ENCODE measurements at regions of chr12 and their contacts with region 1.

Region 1: DNA sequence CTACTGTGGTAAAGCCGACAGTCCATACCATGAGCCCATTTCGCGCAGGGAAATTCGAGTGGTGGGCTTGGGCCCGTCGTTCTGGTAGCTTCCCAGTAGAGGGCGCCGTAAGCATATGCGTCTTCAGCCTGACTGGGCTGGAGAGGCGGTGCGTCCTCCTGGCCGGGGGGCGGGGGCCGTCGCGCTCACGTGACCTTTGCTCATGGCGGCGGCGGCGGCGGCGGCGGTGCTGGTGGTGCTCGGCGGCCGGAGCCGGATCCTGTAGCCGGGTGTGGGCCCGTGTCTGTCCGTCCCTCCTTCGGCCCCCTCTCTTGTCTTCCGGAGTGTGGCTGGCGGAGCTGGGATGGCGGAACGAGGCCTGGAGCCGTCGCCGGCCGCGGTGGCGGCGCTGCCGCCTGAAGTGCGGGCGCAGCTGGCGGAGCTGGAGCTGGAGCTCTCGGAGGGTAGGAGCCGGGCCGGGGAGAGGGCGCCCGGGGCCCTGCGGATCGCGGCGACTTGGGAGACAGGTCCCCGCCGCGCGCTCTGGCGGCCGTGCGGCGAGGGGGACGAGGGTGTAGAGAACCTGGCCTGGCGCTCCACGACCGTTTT is at the start of gene DIP2B:
- DNase-seq: peak; percentile 98
- H3K4me3 Mint-ChIP-seq: peak within 1 kb of the TSS; percentile 91
- H3K27ac Mint-ChIP-seq: peak within 1 kb of the TSS; percentile 90
- H3K4me1 Mint-ChIP-seq: peaks cover 42% of the 10 kb centered on the region
- H3K27me3 Mint-ChIP-seq: no peaks in the 10 kb centered on the region
- total RNA-seq, gene DIP2B: 27.8 to 28.2 TPM

Region 2: DNA sequence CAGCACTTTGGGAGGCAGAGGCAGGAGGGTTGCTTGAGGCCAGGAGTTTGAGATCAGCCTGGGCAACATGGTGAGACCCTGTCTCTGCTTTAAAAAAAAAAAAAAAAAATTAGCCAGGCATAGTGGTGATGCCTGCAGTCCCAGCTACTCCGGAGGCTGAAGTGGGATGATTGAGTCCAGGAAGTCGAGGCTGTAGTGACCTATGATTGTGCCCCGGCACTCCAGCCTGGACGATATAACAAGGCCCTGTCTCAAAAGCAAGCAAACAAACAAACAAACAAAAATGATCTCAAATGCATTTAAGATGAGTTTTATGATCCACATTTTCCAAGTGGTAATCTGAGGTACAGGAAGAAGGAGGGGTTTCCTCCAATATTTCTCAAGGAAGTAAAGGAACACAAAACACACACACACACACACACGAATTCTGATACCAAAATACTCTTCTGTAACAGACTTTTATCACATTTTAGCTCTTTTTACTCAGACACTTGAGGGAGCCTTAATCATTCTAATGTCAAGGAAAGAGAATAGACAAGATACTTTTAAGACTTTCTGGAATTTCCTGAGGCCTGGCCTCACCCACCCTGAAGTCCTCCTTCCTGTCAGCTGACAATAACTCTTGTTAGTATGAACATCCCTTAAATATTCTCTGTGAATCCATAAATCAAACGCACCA is 293.4 kb before region 1 on chr12:
- CTCF ChIA-PET with region 1: no interaction called
- intact Hi-C with region 1: loop called (anchors 5 kb)
- DNase-seq: peak; percentile 38
- H3K4me3 Mint-ChIP-seq: peak overlapping the region; percentile 10
- H3K27ac Mint-ChIP-seq: peak overlapping the region; percentile 88
- H3K4me1 Mint-ChIP-seq: peaks cover 40% of the 10 kb centered on the region
- H3K27me3 Mint-ChIP-seq: no peaks in the 10 kb centered on the region

Region 3: GRCh38 chr12:50314629-50315312 is 190.1 kb before region 1 on chr12:
- CTCF ChIA-PET with region 1: no interaction called
- intact Hi-C with region 1: no loop called
- DNase-seq: no peak
- H3K4me3 Mint-ChIP-seq: no peak overlapping the region
- H3K27ac Mint-ChIP-seq: no peak overlapping the region
- H3K4me1 Mint-ChIP-seq: no peaks in the 10 kb centered on the region
- H3K27me3 Mint-ChIP-seq: no peaks in the 10 kb centered on the region

Region 4: GRCh38 chr12:50390284-50390683 is 114.6 kb before region 1 on chr12:
- CTCF ChIA-PET with region 1: no interaction called
- intact Hi-C with region 1: no loop called
- DNase-seq: no peak
- H3K4me3 Mint-ChIP-seq: no peak overlapping the region
- H3K27ac Mint-ChIP-seq: no peak overlapping the region
- H3K4me1 Mint-ChIP-seq: no peaks in the 10 kb centered on the region
- H3K27me3 Mint-ChIP-seq: no peaks in the 10 kb centered on the region

Region 5: DNA sequence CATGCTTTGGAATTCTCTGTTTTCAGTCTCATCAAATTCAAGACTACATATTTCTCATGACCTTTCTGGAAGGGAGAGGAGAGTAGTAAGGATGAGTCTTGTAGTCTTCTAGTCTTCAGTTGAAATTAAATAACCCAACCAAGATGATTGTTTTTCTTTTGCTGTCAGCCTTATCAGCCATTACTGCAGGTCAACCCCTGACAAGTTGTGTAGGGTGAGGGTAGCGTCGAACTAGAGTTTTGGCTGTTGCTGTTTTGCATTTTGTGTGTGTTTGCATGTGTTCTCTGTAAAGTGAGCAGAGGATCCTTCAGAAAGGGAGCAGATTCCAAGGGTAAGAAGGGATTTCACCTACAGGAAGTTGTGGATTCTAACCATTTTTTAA is 28.3 kb after region 1 on chr12:
- CTCF ChIA-PET with region 1: interaction called, 9 read pairs
- intact Hi-C with region 1: loop called (anchors 1 kb)
- DNase-seq: no peak
- H3K4me3 Mint-ChIP-seq: no peak overlapping the region
- H3K27ac Mint-ChIP-seq: no peak overlapping the region
- H3K4me1 Mint-ChIP-seq: peaks cover 39% of the 10 kb centered on the region
- H3K27me3 Mint-ChIP-seq: no peaks in the 10 kb centered on the region

Region 6: DNA sequence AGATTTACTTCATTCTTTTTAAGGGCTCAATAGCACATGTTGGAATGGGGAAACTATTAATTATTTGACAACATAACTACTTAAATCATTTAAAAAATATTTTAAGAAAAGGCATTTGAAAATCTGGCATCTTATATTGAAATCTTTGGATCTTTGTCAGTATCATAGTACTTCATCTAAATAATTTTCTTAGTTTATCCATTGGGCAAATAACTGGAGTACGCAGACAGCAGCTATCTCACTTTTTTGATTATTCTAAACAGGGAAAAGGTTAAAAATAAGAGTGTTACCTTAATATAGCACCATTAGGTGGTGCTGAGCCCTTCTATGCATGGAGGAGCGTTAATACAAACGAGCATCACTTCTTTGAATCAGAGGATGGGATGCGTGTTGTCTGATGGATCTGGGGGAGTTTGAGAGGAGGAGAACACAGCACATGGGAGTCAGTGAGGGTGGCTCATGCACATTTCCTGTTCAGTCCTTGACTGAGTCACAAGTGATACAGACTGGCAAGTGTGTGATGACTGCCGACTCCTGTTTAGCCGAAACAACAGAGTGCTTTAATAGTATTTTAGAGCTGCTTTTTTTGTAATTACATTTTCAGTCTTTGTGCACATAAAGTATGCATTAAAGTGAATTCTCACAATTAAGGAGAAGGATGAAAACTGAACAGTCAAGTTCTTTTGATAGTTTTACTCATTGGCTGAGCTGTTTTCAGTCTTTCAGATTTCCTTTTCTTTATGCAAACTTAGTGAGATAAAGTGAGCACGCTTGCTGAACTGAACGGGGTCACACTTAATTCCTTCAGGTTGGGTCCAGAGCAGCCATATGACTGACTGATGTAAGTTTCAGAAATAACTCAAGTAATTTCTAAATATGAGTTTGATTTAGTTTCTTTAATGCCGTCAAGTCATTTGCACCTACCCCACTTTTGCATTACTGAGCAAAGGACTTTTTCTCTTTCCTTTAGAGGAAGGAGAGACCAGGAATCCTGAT is 92.6 kb after region 1 on chr12:
- CTCF ChIA-PET with region 1: interaction called, 4 read pairs
- intact Hi-C with region 1: loop called (anchors 1 kb)
- DNase-seq: peak; percentile 85
- H3K4me3 Mint-ChIP-seq: peak overlapping the region; percentile 57
- H3K27ac Mint-ChIP-seq: peak overlapping the region; percentile 95
- H3K4me1 Mint-ChIP-seq: peaks cover 49% of the 10 kb centered on the region
- H3K27me3 Mint-ChIP-seq: no peaks in the 10 kb centered on the region

Region 7: GRCh38 chr12:50637870-50638481 is 133.1 kb after region 1 on chr12:
- CTCF ChIA-PET with region 1: interaction called, 130 read pairs
- intact Hi-C with region 1: loop called (anchors 1 kb)
- DNase-seq: no peak
- H3K4me3 Mint-ChIP-seq: no peak overlapping the region
- H3K27ac Mint-ChIP-seq: peak overlapping the region; percentile 47
- H3K4me1 Mint-ChIP-seq: peaks cover 62% of the 10 kb centered on the region
- H3K27me3 Mint-ChIP-seq: no peaks in the 10 kb centered on the region

Region 8: DNA sequence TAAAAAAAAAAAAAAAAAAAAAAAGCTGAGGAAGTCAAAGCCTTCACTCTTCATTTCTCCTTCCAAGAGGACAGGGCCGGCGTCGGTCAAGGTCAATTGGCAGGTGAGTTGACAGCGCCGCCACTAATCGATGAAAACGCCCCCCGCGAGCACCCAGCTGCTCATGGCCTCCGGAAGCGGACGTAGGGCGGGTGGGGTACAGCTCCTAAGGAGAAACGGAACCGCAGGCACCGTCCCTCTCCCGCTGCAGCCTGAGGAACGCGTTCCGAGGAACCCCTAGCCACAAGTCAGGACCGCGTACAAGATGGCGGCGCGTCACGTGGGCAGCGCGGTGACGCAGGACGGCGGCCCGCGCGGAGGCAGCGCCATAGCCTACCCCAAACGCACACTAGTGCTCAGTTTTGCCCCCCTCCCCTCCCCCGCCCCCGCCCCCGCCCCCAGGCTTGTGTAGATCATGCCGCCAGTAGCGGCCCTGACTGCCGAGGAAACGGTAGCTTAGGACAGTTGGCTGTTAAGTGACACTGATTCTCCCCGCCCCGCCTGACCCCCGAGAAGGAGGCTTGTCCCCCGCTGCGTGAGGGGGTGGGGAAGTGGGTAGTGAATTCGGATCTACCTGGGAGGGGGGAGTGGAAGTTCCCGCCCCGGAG is 258.9 kb after region 1 on chr12 and contains the start of gene ATF1:
- CTCF ChIA-PET with region 1: interaction called, 8 read pairs
- intact Hi-C with region 1: loop called (anchors 1 kb)
- DNase-seq: peak; percentile 91
- H3K4me3 Mint-ChIP-seq: peak within 1 kb of the TSS; percentile 83
- H3K27ac Mint-ChIP-seq: peak within 1 kb of the TSS; percentile 94
- H3K4me1 Mint-ChIP-seq: peaks cover 33% of the 10 kb centered on the region
- H3K27me3 Mint-ChIP-seq: no peaks in the 10 kb centered on the region
- total RNA-seq, gene ATF1: 43.3 to 48.5 TPM

Region 9: GRCh38 chr12:50986966-50987737 is 482.3 kb after region 1 on chr12:
- CTCF ChIA-PET with region 1: no interaction called
- intact Hi-C with region 1: loop called (anchors 2 kb)
- DNase-seq: peak; percentile 64
- H3K4me3 Mint-ChIP-seq: no peak overlapping the region
- H3K27ac Mint-ChIP-seq: no peak overlapping the region
- H3K4me1 Mint-ChIP-seq: peaks cover 56% of the 10 kb centered on the region
- H3K27me3 Mint-ChIP-seq: no peaks in the 10 kb centered on the region

Measured in activated naive CD4-positive, alpha-beta T cell treated with anti-CD3 and anti-CD28 coated beads for 36 hours (primary cell).